ENCODE measurements at regions of chr2 and their contacts with region 1.

Region 1: GRCh38 chr2:49459314-49459993 is 305.1 kb upstream of the FSHR start:
- DNase-seq: no peak
- ATAC-seq: no peak
- H3K4me3 Mint-ChIP-seq: no peak overlapping the region
- H3K27ac Mint-ChIP-seq: no peak overlapping the region
- H3K4me1 Mint-ChIP-seq: no peaks in the 10 kb centered on the region
- H3K27me3 Mint-ChIP-seq: no peaks in the 10 kb centered on the region

Region 2: DNA sequence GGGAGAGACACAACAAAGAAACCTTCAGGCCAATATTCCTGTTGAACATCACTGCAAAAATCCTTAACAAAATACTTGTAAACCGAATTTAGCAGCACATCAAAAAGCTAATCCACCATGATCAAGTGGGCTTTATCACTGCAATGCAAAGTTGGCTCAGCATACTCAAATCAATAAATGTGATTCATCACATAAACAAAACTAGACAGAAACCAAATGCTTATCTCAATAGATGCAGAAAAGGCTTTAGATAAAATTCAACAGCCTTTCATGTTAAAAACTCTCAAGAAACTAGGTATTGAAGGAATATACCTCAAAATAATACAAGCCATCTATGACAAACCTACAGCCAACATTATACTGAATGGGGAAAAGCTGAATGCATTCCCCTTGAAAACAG is 821.2 kb before region 1 on chr2:
- CTCF ChIA-PET with region 1: no interaction called
- POLR2A ChIA-PET with region 1: no interaction called
- intact Hi-C with region 1: no loop called
- DNase-seq: no peak
- ATAC-seq: no peak
- H3K4me3 Mint-ChIP-seq: no peak overlapping the region
- H3K27ac Mint-ChIP-seq: no peak overlapping the region
- H3K4me1 Mint-ChIP-seq: no peaks in the 10 kb centered on the region
- H3K27me3 Mint-ChIP-seq: peaks cover 13% of the 10 kb centered on the region

Region 3: DNA sequence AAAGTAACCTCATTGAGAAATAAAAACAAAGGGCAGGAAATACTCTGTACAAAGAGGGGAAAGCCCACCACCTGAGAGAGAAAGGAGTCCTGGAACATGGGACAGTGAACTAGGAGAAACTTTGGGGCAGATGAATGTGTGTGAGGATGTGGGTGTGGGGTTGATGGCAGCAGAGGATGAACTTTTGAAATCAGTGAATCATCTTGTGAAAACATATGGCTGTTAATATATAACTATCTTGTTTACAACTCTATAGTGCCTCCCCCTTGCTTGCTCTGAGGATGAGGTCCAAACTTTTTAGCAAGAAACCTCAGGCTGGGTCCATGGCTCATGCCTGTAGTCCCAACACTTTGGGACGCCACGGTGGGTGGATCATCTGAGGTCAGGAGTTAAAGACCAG is 532.1 kb before region 1 on chr2:
- CTCF ChIA-PET with region 1: no interaction called
- POLR2A ChIA-PET with region 1: no interaction called
- intact Hi-C with region 1: no loop called
- DNase-seq: no peak
- ATAC-seq: no peak
- H3K4me3 Mint-ChIP-seq: no peak overlapping the region
- H3K27ac Mint-ChIP-seq: no peak overlapping the region
- H3K4me1 Mint-ChIP-seq: no peaks in the 10 kb centered on the region
- H3K27me3 Mint-ChIP-seq: peaks cover 3% of the 10 kb centered on the region

Region 4: GRCh38 chr2:49067971-49068370 is 391.5 kb before region 1 on chr2:
- CTCF ChIA-PET with region 1: no interaction called
- POLR2A ChIA-PET with region 1: no interaction called
- intact Hi-C with region 1: no loop called
- DNase-seq: no peak
- ATAC-seq: no peak
- H3K4me3 Mint-ChIP-seq: no peak overlapping the region
- H3K27ac Mint-ChIP-seq: no peak overlapping the region
- H3K4me1 Mint-ChIP-seq: no peaks in the 10 kb centered on the region
- H3K27me3 Mint-ChIP-seq: no peaks in the 10 kb centered on the region

Region 5: GRCh38 chr2:49175831-49176230 is 283.6 kb before region 1 on chr2:
- CTCF ChIA-PET with region 1: no interaction called
- POLR2A ChIA-PET with region 1: no interaction called
- intact Hi-C with region 1: loop called in 1 of 2 experiments (anchors 5 kb)
- DNase-seq: no peak
- ATAC-seq: no peak
- H3K4me3 Mint-ChIP-seq: no peak overlapping the region
- H3K27ac Mint-ChIP-seq: no peak overlapping the region
- H3K4me1 Mint-ChIP-seq: no peaks in the 10 kb centered on the region
- H3K27me3 Mint-ChIP-seq: no peaks in the 10 kb centered on the region

Measured in activated CD4-positive, alpha-beta T cell treated with anti-CD3 and anti-CD28 coated beads for 36 hours (primary cell).